Dorsolateral prefrontal cortex (tissue), 120 donors: ENCODE measurements at regions of chr11 and their contacts with region 1.

Region 1: GRCh38 chr11:130069684-130070108 is at the start of gene APLP2:
- DNase-seq: peak; percentile 97 to 100 (median 99)
- H3K4me3 ChIP-seq: peak within 1 kb of the TSS; percentile 65 to 96 (median 85)
- H3K27ac ChIP-seq: peak within 1 kb of the TSS; percentile 78 to 99 (median 96)
- H3K27me3 ChIP-seq: no peaks in the 10 kb centered on the region
- CTCF ChIP-seq: peak in 13 of 56 donors; percentile 5 to 49 (median 16)
- total RNA-seq, gene APLP2: 165 to 404 (median 324) TPM

Region 2: GRCh38 chr11:129895126-129896041 is 174.3 kb before region 1 on chr11 and contains the start of gene NFRKB:
- intact Hi-C with region 1: loop called in 1 of 2 experiments (anchors 5 kb)
- DNase-seq: peak; percentile 66 to 94 (median 82)
- H3K4me3 ChIP-seq: peak within 1 kb of the TSS; percentile 74 to 97 (median 89)
- H3K27ac ChIP-seq: peak within 1 kb of the TSS in 55 of 59 donors; percentile 2 to 90 (median 74)
- H3K27me3 ChIP-seq: no peaks in the 10 kb centered on the region
- CTCF ChIP-seq: peak in 7 of 56 donors; percentile 13 to 29 (median 20)
- total RNA-seq, gene NFRKB: 15.4 to 34.0 (median 23.6) TPM

Region 3: GRCh38 chr11:129922674-129923073 is 147.0 kb before region 1 on chr11:
- intact Hi-C with region 1: loop called (anchors 10 kb)
- DNase-seq: no peak
- H3K4me3 ChIP-seq: no peak overlapping the region
- H3K27ac ChIP-seq: no peak overlapping the region
- H3K27me3 ChIP-seq: no peaks in the 10 kb centered on the region
- CTCF ChIP-seq: no peak

Region 4: DNA sequence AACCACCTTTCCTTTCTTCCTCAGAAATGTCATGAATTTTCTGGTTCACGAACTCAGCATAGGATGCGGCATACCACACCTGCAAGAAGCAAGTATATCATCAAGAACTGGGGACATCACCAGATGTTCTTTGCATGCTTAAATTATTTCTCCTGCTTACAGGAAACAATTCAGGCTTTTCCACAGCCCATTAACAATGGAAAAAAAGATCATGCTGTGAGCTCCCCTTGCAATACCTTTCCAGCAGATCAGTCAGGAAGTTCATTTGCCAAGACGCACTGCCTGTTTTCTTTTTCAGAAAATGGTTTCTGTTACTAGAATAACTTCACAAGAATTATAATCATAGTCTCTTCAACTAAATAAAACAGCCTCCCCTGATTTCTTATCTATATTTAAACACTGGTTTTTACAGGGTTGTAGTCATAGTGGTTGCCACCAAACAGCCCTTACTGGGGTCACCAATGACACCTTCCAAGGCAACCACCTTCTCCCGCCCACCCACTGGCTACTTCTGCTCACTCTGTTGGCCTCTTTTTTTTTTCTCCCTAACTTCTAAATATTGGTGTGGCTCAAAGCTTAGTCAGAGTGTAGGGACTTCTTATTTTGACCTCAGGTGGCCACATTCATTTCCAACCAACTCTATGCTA is 132.0 kb before region 1 on chr11:
- intact Hi-C with region 1: no loop called
- DNase-seq: no peak
- H3K4me3 ChIP-seq: no peak overlapping the region
- H3K27ac ChIP-seq: peak overlapping the region in 1 of 59 donors; percentile 2
- H3K27me3 ChIP-seq: no peaks in the 10 kb centered on the region
- CTCF ChIP-seq: no peak

Region 5: GRCh38 chr11:130002846-130003716 is 66.6 kb before region 1 on chr11:
- intact Hi-C with region 1: loop called (anchors 1 kb)
- DNase-seq: peak; percentile 86 to 97 (median 94)
- H3K4me3 ChIP-seq: peak overlapping the region; percentile 61 to 97 (median 82)
- H3K27ac ChIP-seq: peak overlapping the region; percentile 97 to 100 (median 100)
- H3K27me3 ChIP-seq: no peaks in the 10 kb centered on the region
- CTCF ChIP-seq: peak in 17 of 56 donors; percentile 0 to 29 (median 14)

Region 6: GRCh38 chr11:130022798-130023583 is 46.7 kb before region 1 on chr11:
- intact Hi-C with region 1: no loop called
- DNase-seq: no peak
- H3K4me3 ChIP-seq: no peak overlapping the region
- H3K27ac ChIP-seq: no peak overlapping the region
- H3K27me3 ChIP-seq: no peaks in the 10 kb centered on the region
- CTCF ChIP-seq: no peak

Region 7: DNA sequence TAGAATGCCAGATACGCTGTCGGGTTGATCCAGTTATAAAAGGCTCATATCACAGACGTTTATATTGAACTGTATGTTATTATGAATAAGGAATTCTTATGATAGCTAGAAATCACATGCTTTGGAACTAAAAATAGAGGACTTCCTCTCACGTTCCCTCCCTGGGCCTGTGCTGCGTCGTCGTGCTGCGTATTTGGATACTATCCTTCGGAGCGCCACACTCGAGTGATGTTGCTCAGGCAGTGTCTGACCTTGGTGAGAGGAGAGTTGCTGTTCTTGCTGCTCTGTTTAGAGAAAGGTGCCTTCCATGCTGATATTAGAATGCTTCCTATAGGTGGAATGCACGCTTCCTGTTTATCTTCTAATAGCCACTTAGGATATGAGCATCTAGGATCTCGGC is 69.7 kb after region 1 on chr11:
- intact Hi-C with region 1: loop called in 1 of 2 experiments (anchors 5 kb)
- DNase-seq: no peak
- H3K4me3 ChIP-seq: no peak overlapping the region
- H3K27ac ChIP-seq: peak overlapping the region in 54 of 59 donors; percentile 0 to 81 (median 54)
- H3K27me3 ChIP-seq: no peaks in the 10 kb centered on the region
- CTCF ChIP-seq: no peak

Region 8: GRCh38 chr11:130145975-130146776 is 76.5 kb after region 1 on chr11:
- intact Hi-C with region 1: loop called (anchors 5 kb)
- DNase-seq: no peak
- H3K4me3 ChIP-seq: peak overlapping the region in 1 of 59 donors; percentile 6
- H3K27ac ChIP-seq: peak overlapping the region in 52 of 59 donors; percentile 8 to 81 (median 60)
- H3K27me3 ChIP-seq: no peaks in the 10 kb centered on the region
- CTCF ChIP-seq: peak in 25 of 56 donors; percentile 10 to 50 (median 23)

Region 9: DNA sequence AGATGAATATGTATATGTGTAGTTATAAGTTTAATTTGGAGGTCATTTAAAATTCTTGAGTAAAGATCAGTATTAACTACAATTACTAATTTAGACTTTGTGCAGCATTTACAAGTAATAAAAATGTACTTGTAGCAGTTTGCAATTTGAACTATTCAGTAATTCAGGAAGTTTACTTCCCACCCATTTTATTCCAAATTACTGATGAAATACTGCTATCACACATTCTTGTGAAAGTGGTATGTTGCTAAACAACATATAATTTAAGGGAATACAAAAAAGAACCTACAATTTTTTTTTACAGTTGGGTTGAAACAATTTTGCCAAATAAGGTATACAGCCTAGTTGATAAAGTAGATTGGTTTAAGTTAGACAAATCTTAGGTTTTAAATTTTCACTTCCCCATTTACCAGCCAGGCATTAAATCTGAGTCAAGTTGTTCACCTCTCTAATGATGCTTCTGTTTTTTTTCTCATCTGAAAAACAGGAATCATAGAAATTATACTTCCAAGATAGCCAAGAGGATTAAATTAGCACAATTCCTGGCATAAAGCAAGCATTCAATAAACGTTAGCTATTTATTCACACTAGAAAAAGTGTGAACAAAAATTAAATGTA is 199.7 kb after region 1 on chr11:
- intact Hi-C with region 1: no loop called
- DNase-seq: no peak
- H3K4me3 ChIP-seq: no peak overlapping the region
- H3K27ac ChIP-seq: no peak overlapping the region
- H3K27me3 ChIP-seq: no peaks in the 10 kb centered on the region
- CTCF ChIP-seq: no peak

Region 10: DNA sequence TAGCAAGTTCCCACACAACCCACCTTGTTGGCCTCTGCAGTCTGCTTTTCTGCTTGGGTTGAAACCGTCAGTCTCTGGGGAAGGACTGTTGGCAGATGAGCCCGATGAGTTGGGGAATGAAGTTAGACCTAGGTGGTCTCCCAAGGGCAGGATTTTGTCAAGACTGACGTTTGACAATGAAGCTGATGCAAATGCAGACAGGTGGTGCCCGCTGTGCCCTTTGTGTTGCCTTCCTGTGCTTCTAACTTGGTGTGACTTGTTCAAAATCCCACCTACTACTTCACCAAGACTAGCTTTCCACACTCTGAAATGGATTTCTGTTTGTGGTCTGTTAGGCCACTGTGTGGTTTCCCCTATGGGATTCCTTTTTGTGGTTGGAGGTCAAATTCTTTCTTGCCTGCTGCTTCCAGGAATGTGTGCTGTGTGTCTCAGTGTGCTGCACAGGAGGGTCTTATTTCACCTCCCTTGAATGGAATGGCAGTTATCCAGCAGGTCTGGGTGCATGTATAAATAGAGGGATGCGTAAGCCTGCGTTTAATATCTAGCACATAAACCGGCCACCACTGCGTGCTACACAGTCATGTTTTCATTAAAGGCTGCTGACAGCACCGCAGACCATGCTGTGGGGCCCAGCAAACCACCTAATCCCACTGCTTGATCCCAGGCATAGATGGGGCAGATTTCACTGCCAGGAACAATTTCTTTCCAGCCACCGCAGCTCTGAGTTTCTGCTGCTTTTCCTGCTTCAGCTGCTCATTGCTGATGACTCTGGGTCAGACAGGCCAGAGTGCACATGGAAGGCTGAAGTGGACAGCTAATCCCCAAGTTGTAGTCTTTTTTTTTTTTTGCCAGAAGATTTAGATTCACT is 313.9 kb after region 1 on chr11:
- intact Hi-C with region 1: loop called in 1 of 2 experiments (anchors 10 kb)
- DNase-seq: no peak
- H3K4me3 ChIP-seq: no peak overlapping the region
- H3K27ac ChIP-seq: no peak overlapping the region
- H3K27me3 ChIP-seq: no peaks in the 10 kb centered on the region
- CTCF ChIP-seq: no peak